ENCODE measurements at regions of chr4 and their contacts with region 1.

Region 1: GRCh38 chr4:111689214-111689613 is 456.0 kb upstream of the FAM241A start:
- DNase-seq: no peak
- H3K4me3 ChIP-seq: no peak overlapping the region
- H3K27ac ChIP-seq: no peak overlapping the region
- H3K4me1 ChIP-seq: no peaks in the 10 kb centered on the region
- H3K27me3 ChIP-seq: peaks cover 0 to 6% of the 10 kb centered on the region in 2 experiments
- CTCF ChIP-seq: no peak
- POLR2A ChIP-seq: no peak

Region 2: GRCh38 chr4:111535792-111536191 is 153.4 kb before region 1 on chr4:
- CTCF ChIA-PET with region 1: no interaction called
- POLR2A ChIA-PET with region 1: no interaction called
- dilution Hi-C with region 1: no loop called
- intact Hi-C with region 1: no loop called
- DNase-seq: peak; percentile 94
- H3K4me3 ChIP-seq: no peak overlapping the region
- H3K27ac ChIP-seq: peak overlapping the region; percentile 50
- H3K4me1 ChIP-seq: peaks cover 12% of the 10 kb centered on the region
- H3K27me3 ChIP-seq: no peaks in the 10 kb centered on the region
- CTCF ChIP-seq: no peak
- POLR2A ChIP-seq: no peak

Region 3: DNA sequence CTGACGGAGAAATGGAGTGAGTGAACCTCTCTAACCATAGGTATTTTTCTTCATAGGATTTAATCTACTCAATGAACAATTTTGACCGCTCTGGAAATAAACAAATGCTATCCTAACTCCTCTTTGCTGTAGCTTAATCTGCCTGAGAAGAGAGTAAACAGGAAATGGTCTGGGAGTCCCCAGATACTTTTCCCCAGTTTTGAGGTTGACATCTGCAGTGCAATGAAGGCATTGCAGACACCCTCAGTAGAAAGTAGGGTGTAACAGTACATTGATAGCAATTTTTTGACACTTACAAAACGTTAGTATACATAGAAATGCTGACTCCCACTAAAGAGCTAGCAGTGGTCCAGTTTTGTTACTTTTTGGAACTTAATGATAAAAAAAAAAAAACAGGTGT is 39.9 kb before region 1 on chr4:
- CTCF ChIA-PET with region 1: no interaction called
- POLR2A ChIA-PET with region 1: no interaction called
- dilution Hi-C with region 1: no loop called
- intact Hi-C with region 1: loop called (anchors 1 kb)
- DNase-seq: no peak
- H3K4me3 ChIP-seq: no peak overlapping the region
- H3K27ac ChIP-seq: no peak overlapping the region
- H3K4me1 ChIP-seq: no peaks in the 10 kb centered on the region
- H3K27me3 ChIP-seq: peaks cover 15 to 16% of the 10 kb centered on the region in 2 experiments
- CTCF ChIP-seq: no peak
- POLR2A ChIP-seq: no peak

Measured in endothelial cell of umbilical vein (primary cell).